RWPE1 (cell line): ENCODE measurements at regions of chr1 and their contacts with region 1.

Region 1: GRCh38 chr1:151619489-151620093 is 7.7 kb downstream of the SNX27 start:
- DNase-seq: no peak
- H3K27ac ChIP-seq: peak overlapping the region; percentile 39; the same call in 1 of the 2 replicates
- CTCF ChIP-seq: no peak

Region 2: DNA sequence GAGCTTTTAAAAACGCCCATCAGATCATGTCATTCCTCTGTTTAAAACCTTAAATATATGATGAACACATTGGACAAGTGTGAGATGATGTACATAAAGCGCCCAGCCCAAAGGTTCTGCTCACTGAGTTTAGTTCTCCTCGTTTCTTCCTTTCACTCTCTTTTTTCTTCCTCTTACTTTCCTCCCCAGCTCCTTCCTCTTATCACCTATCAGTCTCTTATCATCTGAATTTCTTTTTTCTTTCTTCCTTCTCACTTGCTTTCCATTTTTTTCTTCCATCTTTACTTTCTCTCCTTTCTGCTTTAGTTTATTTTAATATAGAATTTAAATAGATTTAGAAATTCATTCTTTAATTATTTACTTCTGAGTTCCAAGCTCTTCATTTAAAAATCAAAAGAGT is 142.5 kb before region 1 on chr1:
- CTCF ChIA-PET with region 1: interaction called, 12 read pairs
- POLR2A ChIA-PET with region 1: no interaction called
- DNase-seq: no peak
- H3K27ac ChIP-seq: no peak overlapping the region
- CTCF ChIP-seq: no peak